ENCODE measurements at regions of chr2 and their contacts with region 1.

Region 1: GRCh38 chr2:227238238-227239237 is 74.1 kb downstream of the COL4A3 start:
- DNase-seq: peak; percentile 58 to 69
- ATAC-seq: peak in 2 of 4 donors; percentile 44 to 49
- H3K4me3 ChIP-seq: no peak overlapping the region
- H3K27ac ChIP-seq: peak overlapping the region; percentile 28
- H3K4me1 ChIP-seq: peaks cover 5% of the 10 kb centered on the region
- H3K27me3 ChIP-seq: no peaks in the 10 kb centered on the region
- CTCF ChIP-seq: peak; percentile 96

Region 2: GRCh38 chr2:225668606-225669266 is 1569.8 kb before region 1 on chr2:
- intact Hi-C with region 1: loop called in 1 of 2 experiments (anchors 10 kb)
- DNase-seq: no peak
- ATAC-seq: peak in 2 of 4 donors; percentile 65 to 68
- H3K4me3 ChIP-seq: no peak overlapping the region
- H3K27ac ChIP-seq: no peak overlapping the region
- H3K4me1 ChIP-seq: no peaks in the 10 kb centered on the region
- H3K27me3 ChIP-seq: no peaks in the 10 kb centered on the region
- CTCF ChIP-seq: peak; percentile 65

Region 3: GRCh38 chr2:227125506-227125905 is 113.0 kb before region 1 on chr2:
- intact Hi-C with region 1: loop called (anchors 1 to 2 kb)
- DNase-seq: no peak
- ATAC-seq: no peak
- H3K4me3 ChIP-seq: no peak overlapping the region
- H3K27ac ChIP-seq: no peak overlapping the region
- H3K4me1 ChIP-seq: peaks cover 4% of the 10 kb centered on the region
- H3K27me3 ChIP-seq: no peaks in the 10 kb centered on the region
- CTCF ChIP-seq: no peak

Region 4: GRCh38 chr2:227214622-227215041 is 23.9 kb before region 1 on chr2:
- intact Hi-C with region 1: no loop called
- DNase-seq: no peak
- ATAC-seq: peak; percentile 59 to 78 (median 61)
- H3K4me3 ChIP-seq: no peak overlapping the region
- H3K27ac ChIP-seq: peak overlapping the region; percentile 61
- H3K4me1 ChIP-seq: peaks cover 26% of the 10 kb centered on the region
- H3K27me3 ChIP-seq: no peaks in the 10 kb centered on the region
- CTCF ChIP-seq: no peak

Region 5: DNA sequence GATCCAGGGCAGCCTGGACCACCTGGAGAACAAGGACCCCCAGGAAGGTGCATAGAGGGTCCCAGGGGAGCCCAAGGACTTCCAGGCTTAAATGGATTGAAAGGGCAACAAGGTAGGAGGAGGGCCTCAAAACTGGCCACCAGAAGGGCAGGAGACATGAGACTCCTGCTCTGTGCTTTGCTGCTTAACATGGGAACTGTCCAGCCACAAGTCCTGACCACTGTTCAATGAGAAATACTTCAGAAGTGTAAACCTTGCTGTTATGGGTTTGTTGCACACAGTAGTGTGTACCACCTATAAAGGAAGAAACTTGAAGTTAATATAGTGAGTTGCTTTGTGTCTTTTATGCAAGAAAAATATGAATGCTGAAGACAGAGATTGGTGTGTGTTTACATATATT is 42.4 kb after region 1 on chr2:
- intact Hi-C with region 1: no loop called
- DNase-seq: no peak
- ATAC-seq: no peak
- H3K4me3 ChIP-seq: no peak overlapping the region
- H3K27ac ChIP-seq: no peak overlapping the region
- H3K4me1 ChIP-seq: no peaks in the 10 kb centered on the region
- H3K27me3 ChIP-seq: no peaks in the 10 kb centered on the region
- CTCF ChIP-seq: no peak

Region 6: GRCh38 chr2:227301523-227301922 is 63.0 kb after region 1 on chr2:
- intact Hi-C with region 1: loop called in 1 of 2 experiments (anchors 5 kb)
- DNase-seq: no peak
- ATAC-seq: peak; percentile 71 to 95 (median 92)
- H3K4me3 ChIP-seq: no peak overlapping the region
- H3K27ac ChIP-seq: no peak overlapping the region
- H3K4me1 ChIP-seq: peaks cover 3% of the 10 kb centered on the region
- H3K27me3 ChIP-seq: no peaks in the 10 kb centered on the region
- CTCF ChIP-seq: no peak

Region 7: DNA sequence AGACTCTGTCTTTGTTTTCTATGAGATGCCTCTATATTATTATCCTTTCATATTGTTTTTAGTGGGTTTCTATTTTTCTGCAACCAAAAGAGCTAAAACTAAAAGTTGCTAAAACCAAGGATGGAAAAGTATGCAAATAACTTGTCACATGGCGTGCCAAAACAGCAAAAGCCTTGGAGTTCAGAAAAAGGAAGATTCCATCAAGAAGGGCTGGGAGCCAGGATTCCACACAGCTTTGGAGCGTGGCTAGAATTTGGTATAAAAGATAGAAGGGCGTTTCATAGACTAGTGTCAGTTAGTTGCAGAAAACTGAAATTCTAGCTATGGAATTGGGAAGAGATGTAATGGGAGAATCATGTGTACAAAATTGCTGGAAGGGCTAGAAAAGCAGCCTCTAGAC is 145.1 kb after region 1 on chr2:
- intact Hi-C with region 1: no loop called
- DNase-seq: no peak
- ATAC-seq: no peak
- H3K4me3 ChIP-seq: no peak overlapping the region
- H3K27ac ChIP-seq: no peak overlapping the region
- H3K4me1 ChIP-seq: no peaks in the 10 kb centered on the region
- H3K27me3 ChIP-seq: peaks cover 0 to 19% (median 2%) of the 10 kb centered on the region in 3 donors
- CTCF ChIP-seq: no peak

Region 8: DNA sequence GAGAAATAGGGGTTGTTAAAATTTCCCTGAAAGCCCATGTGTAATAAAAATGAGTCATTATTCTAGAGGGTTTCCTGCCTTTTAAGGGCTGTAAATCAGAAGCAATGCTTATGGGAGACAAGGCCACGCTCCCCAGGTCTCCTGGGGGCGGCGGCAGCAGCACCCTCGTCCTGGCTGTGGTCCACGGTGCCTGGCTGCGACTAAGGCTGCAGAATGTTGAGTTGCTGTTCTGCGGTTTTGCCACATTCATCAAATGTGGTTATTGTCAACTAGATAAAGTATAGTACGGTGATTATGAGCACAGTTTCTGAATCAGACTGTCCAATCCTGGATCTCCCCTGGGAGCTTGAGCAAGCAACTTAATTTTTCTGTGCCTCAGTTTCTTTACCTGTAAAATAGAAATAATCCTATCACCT is 221.5 kb after region 1 on chr2:
- intact Hi-C with region 1: no loop called
- DNase-seq: no peak
- ATAC-seq: no peak
- H3K4me3 ChIP-seq: no peak overlapping the region
- H3K27ac ChIP-seq: no peak overlapping the region
- H3K4me1 ChIP-seq: no peaks in the 10 kb centered on the region
- H3K27me3 ChIP-seq: no peaks in the 10 kb centered on the region
- CTCF ChIP-seq: no peak

Measured in psoas muscle (tissue), 8 donors.